Gastrocnemius medialis (tissue), 4 donors: ENCODE measurements at regions of chr2 and their contacts with region 1.

Region 1: DNA sequence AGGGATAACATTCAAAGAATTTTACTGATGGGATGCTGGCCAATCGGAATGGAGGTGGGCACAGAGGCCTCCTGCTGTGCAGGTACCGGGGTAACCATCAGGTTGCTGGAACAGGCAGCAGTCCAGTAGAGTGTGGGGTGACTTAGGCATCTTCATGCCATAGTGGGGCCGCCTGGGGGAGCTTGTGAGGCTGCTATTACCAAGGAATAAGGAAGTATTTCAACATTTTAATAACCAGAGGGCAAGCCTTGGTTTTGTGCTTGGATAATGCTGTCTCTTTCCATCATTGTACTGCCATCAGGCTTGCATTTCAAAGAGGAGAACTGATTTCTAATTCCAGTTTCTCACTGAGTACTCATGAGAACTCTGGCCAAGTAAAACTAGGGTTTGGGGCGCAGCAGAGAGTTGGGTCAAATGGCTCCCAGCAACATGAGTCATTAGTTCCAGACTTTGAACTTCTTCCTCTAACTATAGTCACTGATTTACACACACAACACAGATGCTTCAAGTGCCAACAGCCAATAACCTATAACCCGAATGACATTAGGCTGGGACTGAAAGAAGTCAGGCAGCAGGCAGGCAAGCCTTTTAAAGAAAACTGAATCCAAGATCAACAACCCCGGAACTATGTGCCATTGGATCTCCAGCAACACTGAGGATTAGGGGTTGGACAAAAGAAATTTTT is 56.1 kb upstream of the FHL2 start:
- DNase-seq: peak in 1 of 2 donors; percentile 21
- ATAC-seq: peak in 1 of 2 donors; percentile 3
- H3K4me3 ChIP-seq: no peak overlapping the region
- H3K27ac ChIP-seq: peak overlapping the region in 3 of 4 donors; percentile 6 to 32 (median 21)
- H3K4me1 ChIP-seq: peaks cover 8 to 13% of the 10 kb centered on the region in 2 donors
- H3K27me3 ChIP-seq: no peaks in the 10 kb centered on the region
- CTCF ChIP-seq: no peak
- POLR2A ChIP-seq: no peak

Region 2: DNA sequence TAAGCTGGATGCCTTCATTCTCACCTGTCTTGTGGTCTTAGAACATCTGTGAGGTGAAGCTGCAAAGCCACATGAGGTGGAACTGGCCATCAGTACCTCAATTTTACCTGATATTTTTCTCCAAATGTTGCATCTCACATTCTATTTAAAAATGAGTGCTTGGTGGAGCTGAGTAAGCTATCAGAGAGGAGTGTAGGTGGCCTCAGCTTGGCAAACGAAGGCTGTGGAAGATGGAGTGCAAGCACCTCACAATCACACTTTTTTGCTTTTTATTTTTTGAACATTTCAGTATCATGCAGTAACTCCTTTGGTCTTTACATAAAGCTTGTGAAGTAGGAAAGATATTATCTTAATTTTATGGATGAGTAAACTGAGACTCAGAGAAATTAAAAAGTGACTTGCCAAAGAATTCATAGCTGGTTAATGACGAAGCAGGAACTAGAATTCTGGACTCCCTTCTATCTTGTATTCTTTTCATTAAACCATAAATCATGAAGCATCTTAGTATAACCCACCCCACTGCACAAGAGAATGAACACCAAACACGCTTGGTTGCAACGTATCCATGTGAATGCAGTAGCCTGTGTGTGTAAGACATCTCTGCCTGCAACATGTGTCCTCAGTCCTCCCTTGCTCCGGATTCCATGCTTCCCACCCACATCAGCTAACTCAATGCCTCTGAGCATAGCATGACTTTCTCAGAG is 90.4 kb before region 1 on chr2:
- in situ Hi-C with region 1: no loop called
- intact Hi-C with region 1: no loop called
- DNase-seq: no peak
- ATAC-seq: no peak
- H3K4me3 ChIP-seq: no peak overlapping the region
- H3K27ac ChIP-seq: no peak overlapping the region
- H3K4me1 ChIP-seq: peaks cover 4 to 13% of the 10 kb centered on the region in 2 donors
- H3K27me3 ChIP-seq: no peaks in the 10 kb centered on the region
- CTCF ChIP-seq: no peak
- POLR2A ChIP-seq: no peak

Region 3: DNA sequence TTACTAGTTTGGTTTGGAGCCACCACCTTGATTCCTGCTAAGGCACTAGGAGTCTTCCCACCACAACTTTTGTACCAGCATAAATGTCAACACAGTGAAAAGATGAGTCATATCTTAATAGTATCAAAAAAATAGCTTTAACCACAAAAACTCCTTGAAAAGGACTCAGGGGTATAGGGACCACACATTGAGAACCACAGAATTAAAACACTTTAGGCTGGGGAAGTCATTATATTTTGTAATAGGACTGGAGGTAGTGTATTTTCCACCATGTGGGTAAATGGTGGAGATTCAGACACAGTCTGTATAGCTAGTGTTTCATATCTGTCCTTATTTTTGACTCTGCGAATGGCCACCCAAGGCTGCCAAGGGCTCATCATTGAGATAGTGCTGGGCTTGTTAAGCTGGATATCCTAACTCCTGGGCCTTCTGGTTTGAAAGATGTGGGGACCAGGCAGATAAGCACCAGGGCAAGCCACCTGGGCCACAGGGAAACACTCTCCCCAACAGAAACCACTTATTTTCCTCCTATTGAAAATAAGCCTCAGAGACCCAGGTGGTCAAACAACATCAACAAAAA is 37.0 kb before region 1 on chr2:
- in situ Hi-C with region 1: no loop called
- intact Hi-C with region 1: no loop called
- DNase-seq: no peak
- ATAC-seq: no peak
- H3K4me3 ChIP-seq: no peak overlapping the region
- H3K27ac ChIP-seq: no peak overlapping the region
- H3K4me1 ChIP-seq: peaks cover 0 to 9% of the 10 kb centered on the region in 2 donors
- H3K27me3 ChIP-seq: no peaks in the 10 kb centered on the region
- CTCF ChIP-seq: no peak
- POLR2A ChIP-seq: no peak

Region 4: DNA sequence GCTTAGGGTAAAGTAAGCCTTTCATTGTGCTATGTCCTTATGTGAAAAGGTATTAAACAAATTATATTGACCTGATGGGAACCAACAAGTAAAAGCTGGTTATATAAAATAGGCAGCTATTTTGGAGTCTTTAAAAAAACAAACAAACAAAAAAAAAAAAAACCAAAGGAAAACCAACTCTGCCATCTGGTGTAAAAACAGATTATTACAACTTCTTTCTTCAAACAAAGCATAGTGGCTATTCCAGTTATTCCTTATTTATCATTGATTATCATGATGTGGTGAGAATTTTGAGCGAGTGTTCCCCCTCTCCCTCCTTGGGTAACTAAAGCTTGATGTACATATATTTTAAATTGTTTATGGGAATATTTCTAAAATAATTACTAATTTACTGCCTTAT is 66.3 kb after region 1 on chr2:
- in situ Hi-C with region 1: no loop called
- intact Hi-C with region 1: loop called (anchors 10 kb)
- DNase-seq: no peak
- ATAC-seq: no peak
- H3K4me3 ChIP-seq: no peak overlapping the region
- H3K27ac ChIP-seq: no peak overlapping the region
- H3K4me1 ChIP-seq: peaks cover 16 to 22% of the 10 kb centered on the region in 2 donors
- H3K27me3 ChIP-seq: no peaks in the 10 kb centered on the region
- CTCF ChIP-seq: peak; percentile 58 to 75 (median 64)
- POLR2A ChIP-seq: no peak